Pancreas (tissue), 10 donors: ENCODE measurements at regions of chr12 and their contacts with region 1.

Region 1: DNA sequence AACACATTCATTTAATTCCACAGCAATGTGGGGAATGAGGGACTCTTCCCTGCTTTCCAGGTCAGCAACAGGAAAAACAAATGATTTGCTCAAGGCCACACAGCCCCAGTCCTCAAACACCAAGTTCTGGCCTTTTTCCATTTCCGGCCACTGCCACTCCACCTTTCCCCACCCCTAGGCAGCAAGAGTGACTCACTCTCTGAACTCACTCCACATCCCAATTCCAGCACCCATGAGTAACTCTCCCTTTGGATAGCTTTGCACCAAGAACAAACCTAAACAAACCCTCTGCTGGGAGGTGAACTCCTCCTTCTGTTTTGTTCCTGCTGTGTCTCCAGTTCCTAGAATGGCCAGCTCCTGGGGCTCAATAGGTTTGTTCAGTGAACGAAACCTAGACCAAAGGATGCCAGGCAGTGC is 30.4 kb upstream of the PLEKHG6 start:
- DNase-seq: peak in 5 of 6 donors; percentile 54 to 88 (median 78)
- ATAC-seq: peak; percentile 56 to 78 (median 64)
- H3K4me3 ChIP-seq: no peak overlapping the region
- H3K27ac ChIP-seq: peak overlapping the region; percentile 87 to 98 (median 96)
- H3K4me1 ChIP-seq: peaks cover 17 to 23% (median 21%) of the 10 kb centered on the region in 3 donors
- H3K27me3 ChIP-seq: no peaks in the 10 kb centered on the region
- CTCF ChIP-seq: no peak

Region 2: DNA sequence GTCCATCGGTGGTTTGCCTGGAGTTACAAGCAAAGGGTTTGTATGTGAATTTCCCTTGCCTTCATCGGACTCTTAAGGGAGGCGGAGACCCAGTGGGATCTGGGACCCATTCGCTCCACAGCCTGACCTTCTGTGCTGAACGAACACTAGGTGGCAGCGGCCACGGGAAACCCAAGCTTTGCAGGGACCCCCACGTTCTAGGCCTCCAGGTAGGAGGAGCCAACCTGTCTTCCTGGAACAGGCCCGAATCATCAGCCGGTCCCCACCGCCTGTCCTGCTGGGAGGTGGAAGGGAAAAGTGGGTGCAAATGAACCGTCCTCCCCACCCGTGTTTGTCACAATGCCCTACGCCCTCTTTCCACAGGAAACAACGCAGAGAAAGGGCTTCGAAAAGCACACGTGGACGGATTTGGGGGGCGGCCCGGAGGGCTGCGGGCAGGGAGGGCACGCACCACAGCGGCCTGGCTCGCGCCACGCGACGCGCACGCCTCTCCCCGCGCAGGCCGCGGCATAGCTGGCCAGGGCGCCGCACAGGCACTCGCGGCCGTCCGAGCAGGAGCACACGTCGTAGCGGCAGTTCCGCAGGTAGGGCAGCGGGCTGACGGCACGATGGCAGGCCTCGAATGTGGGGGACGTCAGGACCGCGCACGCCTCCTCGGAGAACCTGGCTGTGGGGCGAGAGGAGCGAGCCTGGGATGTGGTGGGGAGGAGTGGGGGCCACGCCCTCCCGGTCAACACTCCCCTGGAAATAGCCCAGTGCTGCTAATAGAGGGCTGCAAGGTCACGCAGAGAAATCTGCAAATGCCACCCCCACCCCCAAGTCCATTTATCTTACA is 223.4 kb before region 1 on chr12:
- intact Hi-C with region 1: loop called in 2 of 3 experiments (anchors 5 kb)
- DNase-seq: no peak
- ATAC-seq: peak; percentile 17 to 58 (median 40)
- H3K4me3 ChIP-seq: peak overlapping the region in 2 of 4 donors; percentile 11 to 26
- H3K27ac ChIP-seq: no peak overlapping the region
- H3K4me1 ChIP-seq: no peaks in the 10 kb centered on the region
- H3K27me3 ChIP-seq: no peaks in the 10 kb centered on the region
- CTCF ChIP-seq: no peak

Region 3: DNA sequence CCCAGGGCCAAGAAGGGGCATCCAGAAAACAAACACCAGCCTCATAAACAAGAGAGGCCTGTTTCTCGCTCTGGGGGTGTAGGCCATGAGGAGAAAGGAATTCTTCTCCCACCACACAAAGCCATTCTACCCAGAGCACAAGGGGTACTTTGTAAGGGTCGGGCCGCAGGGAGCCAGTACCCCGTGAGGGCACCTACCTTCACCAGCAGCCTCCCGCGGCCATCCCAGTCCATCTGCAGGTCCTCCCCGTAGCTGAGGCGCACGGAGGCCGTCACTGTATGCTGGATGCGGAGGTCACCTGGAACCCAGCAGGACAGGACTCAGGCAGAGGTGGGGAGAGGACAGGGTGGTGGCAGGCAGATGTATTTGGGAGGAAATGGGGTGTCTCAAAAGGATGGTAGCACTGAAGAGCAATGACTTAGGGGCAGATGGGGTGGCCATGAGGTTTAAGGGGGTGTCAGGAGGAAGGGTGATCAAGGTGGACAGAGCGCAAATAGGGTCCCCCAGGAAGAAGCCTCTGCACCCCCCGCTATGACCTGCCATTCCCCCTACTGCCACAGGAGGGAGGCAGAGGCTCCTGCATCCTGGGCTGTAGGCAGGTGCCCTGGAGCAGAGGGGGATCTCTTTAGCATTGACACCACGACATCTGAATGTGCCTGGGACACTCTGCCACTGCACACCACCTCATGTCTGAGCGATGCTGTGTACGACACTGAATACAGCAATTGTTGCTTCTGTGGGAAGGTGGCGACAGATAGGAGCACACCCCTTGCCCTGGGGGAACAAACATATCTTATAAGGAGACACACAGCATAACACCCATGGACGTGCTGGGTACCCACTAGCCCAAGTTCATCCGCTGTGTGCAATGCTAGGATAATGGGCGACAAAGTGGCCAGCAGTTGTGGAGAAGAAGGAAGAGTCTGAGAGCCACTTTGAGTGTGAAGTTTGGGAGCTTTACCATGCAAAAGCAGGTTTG is 217.0 kb before region 1 on chr12:
- intact Hi-C with region 1: loop called in 2 of 3 experiments (anchors 5 kb)
- DNase-seq: peak in 3 of 6 donors; percentile 15 to 67 (median 46)
- ATAC-seq: peak; percentile 77 to 89 (median 84)
- H3K4me3 ChIP-seq: no peak overlapping the region
- H3K27ac ChIP-seq: no peak overlapping the region
- H3K4me1 ChIP-seq: no peaks in the 10 kb centered on the region
- H3K27me3 ChIP-seq: no peaks in the 10 kb centered on the region
- CTCF ChIP-seq: peak; percentile 61 to 85 (median 70)

Region 4: GRCh38 chr12:6195665-6196535 is 84.2 kb before region 1 on chr12:
- intact Hi-C with region 1: loop called in 2 of 3 experiments (anchors 2 kb)
- DNase-seq: peak; percentile 80 to 93 (median 90)
- ATAC-seq: peak; percentile 77 to 90 (median 84)
- H3K4me3 ChIP-seq: no peak overlapping the region
- H3K27ac ChIP-seq: peak overlapping the region in 3 of 4 donors; percentile 9 to 59 (median 58)
- H3K4me1 ChIP-seq: peaks cover 0 to 10% (median 4%) of the 10 kb centered on the region in 3 donors
- H3K27me3 ChIP-seq: no peaks in the 10 kb centered on the region
- CTCF ChIP-seq: peak; percentile 89 to 93 (median 90)

Region 5: DNA sequence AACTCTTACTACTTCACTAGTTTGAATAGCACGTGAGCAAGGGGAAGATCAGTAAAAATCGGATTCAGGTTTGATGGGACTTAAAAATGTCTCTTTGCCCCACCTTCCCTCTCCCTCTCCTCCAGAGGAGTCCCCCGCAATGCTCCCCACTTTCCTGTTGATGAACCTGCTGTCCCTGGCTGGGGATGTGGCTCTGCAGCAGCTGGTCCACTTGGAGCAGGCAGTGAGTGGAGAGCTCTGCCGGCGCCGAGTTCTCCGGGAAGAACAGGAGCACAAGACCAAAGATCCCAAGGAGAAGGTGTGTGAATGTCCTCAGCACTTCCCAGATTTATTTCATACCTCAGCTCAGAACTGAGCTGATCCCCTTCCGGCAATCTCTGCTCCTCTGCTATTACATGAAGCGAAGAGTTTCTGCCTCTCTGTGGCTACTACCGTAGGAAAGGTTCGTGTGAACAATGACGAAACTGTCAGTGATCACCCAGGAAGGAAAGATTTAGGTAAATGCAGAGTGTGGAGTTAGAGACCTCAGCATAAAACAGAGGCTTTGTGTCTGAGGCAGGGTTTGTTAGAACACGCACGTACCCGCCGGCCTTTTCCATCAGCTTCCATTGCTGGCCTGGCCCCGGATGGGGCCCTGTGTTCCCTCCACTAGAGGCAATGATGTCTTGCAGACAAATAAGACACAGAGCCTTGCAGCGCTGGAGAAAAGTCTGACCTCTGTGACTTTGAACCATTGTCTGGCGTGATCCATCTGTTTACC is 246.9 kb after region 1 on chr12:
- intact Hi-C with region 1: no loop called
- DNase-seq: no peak
- ATAC-seq: no peak
- H3K4me3 ChIP-seq: no peak overlapping the region
- H3K27ac ChIP-seq: no peak overlapping the region
- H3K4me1 ChIP-seq: no peaks in the 10 kb centered on the region
- H3K27me3 ChIP-seq: no peaks in the 10 kb centered on the region
- CTCF ChIP-seq: no peak

Region 6: DNA sequence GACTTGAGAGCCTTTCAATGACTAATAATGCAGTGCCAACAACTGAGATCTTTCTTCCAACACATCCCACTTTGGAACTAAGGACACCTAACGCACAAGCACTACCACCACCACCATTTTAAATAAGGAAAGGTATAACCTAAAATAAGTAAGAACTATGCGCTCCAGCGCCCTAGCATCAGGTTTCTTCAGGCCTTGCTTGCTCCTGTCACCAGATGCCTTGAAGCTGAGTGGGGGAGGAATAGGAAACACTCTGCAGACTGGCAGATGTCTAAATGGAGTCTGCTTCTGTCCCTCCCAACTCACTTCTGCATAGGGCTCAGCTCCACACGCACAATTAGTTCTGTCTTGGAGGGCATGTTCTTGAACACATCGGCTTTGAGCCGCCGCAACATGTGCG is 312.0 kb after region 1 on chr12:
- intact Hi-C with region 1: no loop called
- DNase-seq: no peak
- ATAC-seq: no peak
- H3K4me3 ChIP-seq: no peak overlapping the region
- H3K27ac ChIP-seq: no peak overlapping the region
- H3K4me1 ChIP-seq: no peaks in the 10 kb centered on the region
- H3K27me3 ChIP-seq: no peaks in the 10 kb centered on the region
- CTCF ChIP-seq: no peak